ENCODE measurements at regions of chr10 and their contacts with region 1.

Region 1: DNA sequence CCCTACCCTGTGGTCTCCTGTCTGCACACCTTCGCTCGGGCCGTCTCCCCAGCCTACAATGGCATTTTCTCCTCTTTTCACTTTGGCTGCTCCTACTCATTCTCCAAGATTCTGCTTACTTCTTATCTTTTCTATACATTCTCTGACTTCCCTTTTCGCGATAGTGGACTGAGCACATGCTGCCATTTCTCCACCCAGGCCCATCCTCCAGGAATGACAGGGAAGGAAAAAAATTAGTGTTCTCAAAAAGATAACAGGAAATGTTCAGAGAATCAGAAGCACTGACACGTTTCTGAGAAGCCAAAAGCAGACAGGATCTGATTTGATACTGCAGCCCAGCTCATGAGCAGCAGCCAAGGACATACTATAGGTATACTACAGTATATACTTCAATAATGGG is 6.4 kb upstream of the ANXA11 start:
- DNase-seq: peak; percentile 40 to 85 (median 56)
- ATAC-seq: peak; percentile 55
- H3K4me3 ChIP-seq: no peak overlapping the region
- H3K27ac ChIP-seq: no peak overlapping the region
- H3K4me1 ChIP-seq: peaks cover 8 to 19% of the 10 kb centered on the region in 2 experiments; a peak in 4 of 5 replicates
- H3K27me3 ChIP-seq: 0 out of 5 replicates have a peak, but pooled peaks cover 0 to 3% of the 10 kb centered on the region in 2 experiments
- CTCF ChIP-seq: no peak
- EP300 ChIP-seq: peak; percentile 71; the same call in 1 of the 2 replicates
- POLR2A ChIP-seq: no peak
- RAD21 ChIP-seq: no peak; a peak in 1 of 4 replicates

Region 2: GRCh38 chr10:80154975-80155695 is 56.7 kb before region 1 on chr10:
- CTCF ChIA-PET with region 1: no interaction called
- POLR2A ChIA-PET with region 1: interaction called, 4 read pairs
- in situ Hi-C with region 1: loop called (anchors 5 kb)
- intact Hi-C with region 1: no loop called
- DNase-seq: no peak
- ATAC-seq: no peak
- H3K4me3 ChIP-seq: no peak overlapping the region
- H3K27ac ChIP-seq: no peak overlapping the region
- H3K4me1 ChIP-seq: peaks cover 15 to 20% of the 10 kb centered on the region in 2 experiments
- H3K27me3 ChIP-seq: no peaks in the 10 kb centered on the region
- CTCF ChIP-seq: no peak
- EP300 ChIP-seq: no peak
- POLR2A ChIP-seq: no peak
- RAD21 ChIP-seq: no peak

Region 3: DNA sequence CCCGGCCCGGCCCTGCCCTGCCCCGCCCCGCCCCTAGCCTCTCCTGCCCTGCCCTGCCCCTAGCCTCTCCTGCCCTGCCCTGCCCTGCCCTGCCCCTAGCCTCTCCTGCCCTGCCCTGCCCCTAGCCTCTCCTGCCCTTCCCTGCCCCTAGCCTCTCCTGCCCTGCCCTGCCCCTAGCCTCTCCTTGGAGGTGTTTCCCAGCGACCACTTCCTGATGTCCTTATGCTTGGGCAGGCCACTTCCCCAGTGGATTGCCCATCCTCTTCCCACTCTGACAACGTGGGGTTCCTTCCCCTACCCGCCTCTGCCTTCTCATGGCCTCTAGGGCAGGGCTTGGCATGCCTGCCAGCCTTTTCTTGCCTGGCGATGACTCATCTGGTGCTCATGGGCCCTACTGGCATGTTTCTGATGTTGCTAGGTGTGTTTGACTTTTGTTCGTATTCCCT is 217.8 kb after region 1 on chr10:
- CTCF ChIA-PET with region 1: no interaction called
- POLR2A ChIA-PET with region 1: no interaction called
- in situ Hi-C with region 1: no loop called
- intact Hi-C with region 1: no loop called
- DNase-seq: no peak
- ATAC-seq: no peak
- H3K4me3 ChIP-seq: no peak overlapping the region
- H3K27ac ChIP-seq: no peak overlapping the region
- H3K4me1 ChIP-seq: no peaks in the 10 kb centered on the region
- H3K27me3 ChIP-seq: peaks cover 10 to 23% of the 10 kb centered on the region in 2 experiments; a peak in 4 of 5 replicates
- CTCF ChIP-seq: no peak
- EP300 ChIP-seq: no peak
- POLR2A ChIP-seq: no peak
- RAD21 ChIP-seq: no peak

Measured in K562 (cell line).